ENCODE measurements at regions of chr17 and their contacts with region 1.

Region 1: DNA sequence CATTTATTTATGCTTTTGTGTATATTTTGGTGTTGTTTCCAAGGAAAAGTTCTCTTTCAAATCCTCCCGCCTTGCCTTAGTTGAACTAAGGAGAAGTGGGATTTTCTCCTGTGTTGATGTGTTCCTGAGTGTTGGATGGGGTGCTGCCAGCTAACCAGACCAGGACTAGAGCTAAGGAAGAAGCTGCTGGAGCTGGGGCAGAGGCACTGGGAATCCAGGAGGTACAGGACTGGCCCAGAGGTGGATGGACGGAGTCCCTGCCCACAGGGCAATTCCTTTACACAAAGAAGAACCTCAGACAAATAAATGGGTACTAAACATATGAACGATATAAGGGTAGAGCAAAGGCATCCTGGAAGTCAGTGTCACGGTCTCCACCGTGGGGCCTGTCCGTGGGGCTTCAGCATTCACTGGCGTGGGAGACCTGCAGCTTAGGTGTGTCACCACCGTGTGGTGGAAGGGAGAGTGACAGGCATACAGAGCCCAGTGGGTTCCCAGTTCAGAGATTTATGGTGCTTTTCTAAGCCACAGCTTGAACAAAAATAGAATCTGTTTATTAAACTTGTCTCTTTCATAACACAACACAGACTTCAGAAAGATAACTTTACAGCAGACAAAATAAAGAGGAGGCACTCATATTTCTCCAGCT is 270.7 kb downstream of the NTN1 start:
- DNase-seq: peak; percentile 43
- H3K4me3 ChIP-seq: no peak overlapping the region
- H3K27ac ChIP-seq: peak overlapping the region; percentile 50 to 66 (median 60)
- H3K4me1 ChIP-seq: peaks cover 7 to 16% (median 13%) of the 10 kb centered on the region in 4 donors
- H3K27me3 ChIP-seq: no peaks in the 10 kb centered on the region
- CTCF ChIP-seq: peak; percentile 68 to 76 (median 75)
- EP300 ChIP-seq: no peak
- POLR2A ChIP-seq: no peak

Region 2: DNA sequence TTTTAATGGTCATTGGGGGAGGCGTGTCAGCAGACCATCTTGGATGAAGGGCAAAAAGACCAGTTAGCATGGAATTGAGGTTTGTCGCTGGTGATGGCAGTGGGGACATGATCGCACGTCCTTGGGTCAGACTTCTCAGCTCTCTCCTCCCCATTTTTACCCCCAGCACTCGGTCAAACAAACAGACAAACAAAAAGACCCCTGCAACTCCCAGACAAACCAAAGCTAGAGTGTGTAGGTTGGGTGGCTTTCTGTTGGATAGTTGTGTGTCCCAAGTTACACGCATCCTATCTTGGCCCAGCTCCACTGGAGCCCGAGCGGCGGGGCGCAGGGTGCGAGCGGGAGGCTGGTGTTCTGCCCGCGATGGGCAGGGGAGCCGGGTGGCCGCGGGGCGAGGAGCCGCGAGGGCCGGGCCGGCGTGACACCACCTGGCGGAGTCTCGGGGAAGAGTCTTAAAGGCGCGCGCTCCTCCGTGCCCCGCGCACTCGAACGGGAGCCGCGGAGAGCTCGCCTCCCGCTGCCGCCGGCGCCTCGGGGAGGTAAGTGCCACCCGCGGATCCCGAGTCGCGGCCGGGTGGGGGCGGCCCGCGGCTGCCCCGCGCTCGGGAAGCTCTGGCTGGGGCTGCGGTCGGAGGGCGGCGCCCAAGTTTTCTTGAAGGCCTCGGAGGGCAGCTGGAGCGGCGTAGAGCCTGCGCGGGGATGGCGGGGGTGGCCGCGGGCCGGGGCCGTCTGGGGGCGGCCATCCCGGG is 289.3 kb before region 1 on chr17:
- in situ Hi-C with region 1: loop called in 1 of 4 experiments (anchors 25 kb)
- intact Hi-C with region 1: loop called (anchors 10 kb)
- DNase-seq: no peak
- H3K4me3 ChIP-seq: peak overlapping the region; percentile 41 to 47 (median 46)
- H3K27ac ChIP-seq: peak overlapping the region in 2 of 4 donors; percentile 48 to 50
- H3K4me1 ChIP-seq: peaks cover 4 to 23% (median 10%) of the 10 kb centered on the region in 4 donors
- H3K27me3 ChIP-seq: peaks cover 75% of the 10 kb centered on the region
- CTCF ChIP-seq: peak in 3 of 5 experiments; percentile 21 to 40 (median 33)
- EP300 ChIP-seq: no peak
- POLR2A ChIP-seq: no peak

Region 3: DNA sequence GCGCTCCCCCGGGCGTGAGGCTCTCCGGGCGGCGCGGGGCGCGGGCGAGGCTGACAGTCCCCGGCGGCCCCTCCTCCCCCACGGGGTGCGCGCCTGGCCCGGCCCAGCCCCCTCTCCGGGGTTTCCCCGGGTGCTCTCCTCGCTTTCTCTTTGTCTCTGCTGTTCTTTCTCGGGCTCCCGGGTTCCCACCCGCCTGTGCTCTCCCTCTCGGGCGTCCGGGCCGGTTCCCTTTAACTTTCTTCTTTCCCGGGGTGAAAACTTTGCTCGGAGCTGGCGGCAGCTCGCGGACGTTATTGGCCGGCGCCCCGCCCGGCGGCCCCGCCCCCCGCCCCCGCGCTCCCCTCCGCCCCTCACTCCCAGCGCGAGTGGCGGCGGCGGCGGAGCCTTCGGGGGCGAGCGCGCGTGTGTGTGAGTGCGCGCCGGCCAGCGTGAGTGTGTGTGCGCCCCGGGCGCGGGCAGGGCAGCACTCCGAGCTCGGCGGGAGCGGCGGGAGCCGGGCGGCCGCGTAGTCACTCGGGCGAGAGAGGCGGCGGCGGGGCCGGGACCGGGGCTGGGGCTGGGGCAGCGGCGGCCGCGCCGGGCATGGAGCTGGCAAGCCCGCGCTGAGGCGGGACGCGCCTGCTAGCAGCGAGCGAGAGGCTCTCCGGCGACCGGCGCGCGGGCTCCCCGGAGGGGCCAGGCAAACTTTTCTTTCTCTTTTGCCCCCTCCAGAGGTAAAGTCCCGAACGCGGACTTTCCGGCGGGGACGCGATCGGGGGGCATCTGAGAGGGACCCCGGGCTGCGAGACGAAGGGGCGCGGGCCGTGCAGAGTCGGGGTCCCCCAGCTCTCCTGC is 270.7 kb before region 1 on chr17 and contains the start of gene NTN1:
- in situ Hi-C with region 1: loop called in 1 of 4 experiments (anchors 25 kb)
- intact Hi-C with region 1: no loop called
- DNase-seq: peak; percentile 30
- H3K4me3 ChIP-seq: peak within 1 kb of the TSS; percentile 58 to 67 (median 60)
- H3K27ac ChIP-seq: peak within 1 kb of the TSS; percentile 72 to 85 (median 82)
- H3K4me1 ChIP-seq: peaks cover 3 to 33% (median 16%) of the 10 kb centered on the region in 4 donors
- H3K27me3 ChIP-seq: peaks cover 77% of the 10 kb centered on the region
- CTCF ChIP-seq: no peak
- EP300 ChIP-seq: no peak
- POLR2A ChIP-seq: no peak
- total RNA-seq, gene NTN1: 3.6 to 20.6 (median 7.2) TPM

Region 4: GRCh38 chr17:9211133-9211765 is 80.8 kb before region 1 on chr17:
- in situ Hi-C with region 1: no loop called
- intact Hi-C with region 1: no loop called
- DNase-seq: no peak
- H3K4me3 ChIP-seq: no peak overlapping the region
- H3K27ac ChIP-seq: no peak overlapping the region
- H3K4me1 ChIP-seq: peaks cover 4 to 14% (median 8%) of the 10 kb centered on the region in 4 donors
- H3K27me3 ChIP-seq: no peaks in the 10 kb centered on the region
- CTCF ChIP-seq: no peak
- EP300 ChIP-seq: no peak
- POLR2A ChIP-seq: no peak

Measured in transverse colon (tissue), 4 donors.